ENCODE measurements at regions of chr13 and their contacts with region 1.

Region 1: DNA sequence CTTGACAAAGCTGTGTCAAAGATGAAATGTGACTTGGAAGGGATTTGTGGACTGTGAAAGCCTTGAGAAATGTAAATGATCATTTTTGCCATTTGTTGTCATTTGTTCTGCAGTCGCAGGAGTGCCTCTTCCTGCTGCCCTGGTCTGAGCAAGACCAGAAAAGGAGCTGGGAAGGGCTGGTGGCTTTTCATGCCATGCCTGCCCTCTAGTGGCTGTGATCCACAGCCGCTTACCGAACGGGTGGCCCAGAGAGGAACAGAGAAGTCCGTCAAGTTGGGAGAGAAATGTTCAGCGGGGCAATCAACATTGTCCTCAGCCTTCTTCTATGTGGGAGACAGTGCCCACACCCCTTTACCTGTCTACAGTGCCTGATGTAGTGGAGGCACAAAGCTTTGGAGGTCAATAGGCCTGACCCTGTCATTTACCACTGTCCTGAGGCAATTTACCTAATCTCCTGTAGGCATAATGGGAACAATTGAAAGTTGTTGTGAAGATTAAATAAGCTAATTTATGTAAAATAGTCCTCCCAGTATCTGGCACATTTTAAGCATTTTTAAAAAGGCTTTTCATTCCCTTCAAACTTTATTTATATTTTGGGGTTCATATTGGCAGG is 224.4 kb downstream of the B3GLCT start:
- DNase-seq: peak; percentile 74
- H3K4me3 ChIP-seq: no peak overlapping the region
- H3K27ac ChIP-seq: no peak overlapping the region
- H3K4me1 ChIP-seq: no peaks in the 10 kb centered on the region
- H3K27me3 ChIP-seq: no peaks in the 10 kb centered on the region
- CTCF ChIP-seq: peak; percentile 90

Region 2: GRCh38 chr13:31236211-31236786 is 187.9 kb before region 1 on chr13:
- intact Hi-C with region 1: loop called (anchors 2 kb)
- DNase-seq: no peak
- H3K4me3 ChIP-seq: no peak overlapping the region
- H3K27ac ChIP-seq: no peak overlapping the region
- H3K4me1 ChIP-seq: no peaks in the 10 kb centered on the region
- H3K27me3 ChIP-seq: no peaks in the 10 kb centered on the region
- CTCF ChIP-seq: peak; percentile 53

Region 3: DNA sequence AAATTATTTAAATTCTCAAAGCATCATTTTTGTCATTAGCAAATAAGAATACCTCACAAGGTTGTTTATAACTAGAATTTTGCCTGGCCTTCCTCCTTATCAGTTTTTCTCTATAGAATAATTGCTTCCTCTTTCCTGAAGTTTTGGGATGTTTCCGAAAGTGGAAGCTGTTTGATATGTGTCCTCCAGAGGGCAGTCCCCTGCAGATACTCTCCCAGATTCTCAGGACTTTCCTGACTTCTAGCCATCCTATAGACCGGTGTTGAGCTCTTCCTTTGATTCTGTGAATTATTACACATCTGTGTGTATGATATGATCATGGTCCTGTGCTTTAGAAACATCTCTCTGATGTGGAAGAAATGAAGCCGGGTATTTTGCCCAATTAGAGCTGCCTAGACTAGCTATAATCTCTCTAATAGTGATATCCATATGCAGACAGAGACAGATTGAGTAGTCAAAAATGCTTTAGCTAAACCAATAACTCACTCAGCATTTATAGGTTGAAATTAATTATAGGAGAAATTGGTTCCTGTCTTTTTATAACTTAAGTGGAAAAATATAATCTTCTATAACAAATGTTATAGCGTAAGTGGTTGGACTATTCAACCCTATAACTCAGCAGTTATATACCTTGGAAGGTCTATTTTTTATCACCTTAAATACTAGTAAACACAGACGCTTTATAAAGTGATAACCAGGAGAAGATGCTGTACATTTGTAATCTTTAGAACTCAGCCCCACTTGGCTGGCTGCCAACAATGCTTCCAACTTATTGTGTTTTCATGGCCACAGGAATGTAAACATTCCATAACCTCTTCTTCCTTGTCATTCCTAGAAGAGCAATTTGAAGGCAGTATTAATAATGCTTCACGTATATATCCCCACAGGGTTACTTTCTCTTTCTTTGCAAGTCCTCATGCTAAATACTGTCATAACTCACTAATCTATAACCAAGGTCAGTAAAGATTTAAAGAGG is 114.1 kb after region 1 on chr13:
- intact Hi-C with region 1: no loop called
- DNase-seq: peak; percentile 25
- H3K4me3 ChIP-seq: no peak overlapping the region
- H3K27ac ChIP-seq: no peak overlapping the region
- H3K4me1 ChIP-seq: no peaks in the 10 kb centered on the region
- H3K27me3 ChIP-seq: no peaks in the 10 kb centered on the region
- CTCF ChIP-seq: peak; percentile 35

Measured in colonic mucosa (tissue), 4 donors.